ENCODE measurements at regions of chr14 and their contacts with region 1.

Region 1: GRCh38 chr14:50860478-50861086 is 11.3 kb upstream of the ABHD12B start:
- DNase-seq: peak; percentile 71
- H3K4me3 Mint-ChIP-seq: peak overlapping the region; percentile 84
- H3K27ac Mint-ChIP-seq: no peak overlapping the region
- H3K4me1 Mint-ChIP-seq: peaks cover 18% of the 10 kb centered on the region
- H3K27me3 Mint-ChIP-seq: peaks cover 28% of the 10 kb centered on the region

Region 2: GRCh38 chr14:50321009-50321660 is 539.4 kb before region 1 on chr14:
- intact Hi-C with region 1: loop called (anchors 2 kb)
- DNase-seq: peak; percentile 68
- H3K4me3 Mint-ChIP-seq: no peak overlapping the region
- H3K27ac Mint-ChIP-seq: no peak overlapping the region
- H3K4me1 Mint-ChIP-seq: peaks cover 20% of the 10 kb centered on the region
- H3K27me3 Mint-ChIP-seq: no peaks in the 10 kb centered on the region

Region 3: DNA sequence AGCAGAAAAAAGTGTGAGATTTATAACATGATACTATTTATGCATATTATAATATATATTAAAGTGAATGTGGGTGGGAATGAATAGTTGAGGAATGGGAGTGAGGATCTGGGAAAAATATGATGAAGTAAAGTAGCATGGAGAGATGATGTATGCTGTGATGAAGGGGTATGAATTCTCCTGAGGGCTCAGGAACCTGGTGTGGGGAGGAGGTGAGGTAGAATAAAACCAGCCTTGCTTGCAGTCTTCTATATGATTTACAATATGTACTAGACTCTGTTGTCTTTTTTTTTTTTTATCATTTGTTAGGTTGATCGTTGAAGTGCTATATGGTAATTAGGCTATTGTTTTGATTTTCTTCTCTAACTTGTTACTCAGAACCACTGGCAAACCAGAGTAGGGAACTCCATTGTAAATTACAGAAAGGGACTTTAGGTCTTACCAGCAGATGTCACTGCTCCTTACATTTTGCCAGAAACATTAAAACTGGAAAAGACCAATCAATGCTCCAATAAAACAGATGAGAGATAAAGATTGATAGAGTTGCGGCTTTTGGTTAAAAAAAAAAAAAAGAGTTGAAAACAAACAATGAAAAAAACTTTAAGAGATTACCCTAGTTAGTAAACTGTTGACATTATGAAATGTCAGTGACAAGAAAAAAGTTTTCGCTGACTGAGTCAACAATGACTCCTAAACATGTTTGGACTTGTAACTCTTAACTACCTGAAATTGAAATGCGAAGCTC is 260.7 kb before region 1 on chr14:
- intact Hi-C with region 1: loop called (anchors 1 kb)
- DNase-seq: no peak
- H3K4me3 Mint-ChIP-seq: no peak overlapping the region
- H3K27ac Mint-ChIP-seq: no peak overlapping the region
- H3K4me1 Mint-ChIP-seq: no peaks in the 10 kb centered on the region
- H3K27me3 Mint-ChIP-seq: peaks cover 4% of the 10 kb centered on the region

Region 4: DNA sequence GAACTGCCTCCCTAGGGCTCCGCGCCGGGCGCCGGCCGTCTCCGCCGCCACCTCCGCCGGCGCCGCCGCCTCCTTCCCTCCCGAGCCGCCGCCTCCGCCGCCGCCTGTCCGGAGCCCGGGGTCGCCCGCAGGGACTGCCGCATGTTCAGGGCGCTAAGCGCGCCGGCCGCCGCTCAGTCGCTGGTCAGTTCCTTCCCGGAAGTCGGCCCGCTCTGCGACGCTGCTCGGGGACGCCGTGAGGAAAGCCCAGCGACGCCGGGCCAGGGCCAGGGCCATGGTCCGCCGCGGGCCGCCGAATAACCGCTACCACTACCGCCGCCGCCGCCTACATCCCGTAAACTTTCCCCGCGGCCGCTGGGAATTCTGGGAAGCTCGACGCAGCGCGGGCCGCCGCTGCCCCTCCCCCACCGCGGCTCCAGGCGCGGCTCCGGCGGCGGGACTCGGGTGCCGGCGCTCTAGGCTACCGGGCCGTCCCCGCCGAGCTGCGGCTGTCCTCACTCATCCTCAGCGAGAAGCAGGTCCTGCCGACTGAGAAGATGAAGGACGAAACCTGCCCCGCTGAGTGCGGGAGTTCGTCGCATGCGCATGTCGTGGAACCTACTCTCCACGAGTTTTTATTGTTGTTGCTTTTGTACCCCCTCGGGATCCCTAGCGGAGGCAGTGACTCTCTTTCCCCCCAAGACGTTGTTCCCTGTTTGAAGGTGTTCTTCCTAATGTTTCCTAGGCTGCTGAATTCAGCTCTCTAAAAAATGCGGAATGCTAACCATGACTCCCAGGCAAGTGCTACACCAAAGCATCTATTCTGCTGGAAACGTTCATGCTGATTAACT is 192.4 kb before region 1 on chr14 and contains the start of gene SAV1:
- intact Hi-C with region 1: loop called (anchors 1 kb)
- DNase-seq: peak; percentile 20
- H3K4me3 Mint-ChIP-seq: peak within 1 kb of the TSS; percentile 86
- H3K27ac Mint-ChIP-seq: peak within 1 kb of the TSS; percentile 47
- H3K4me1 Mint-ChIP-seq: peaks cover 15% of the 10 kb centered on the region
- H3K27me3 Mint-ChIP-seq: peaks cover 10% of the 10 kb centered on the region
- total RNA-seq, gene SAV1: 10.3 and 12.3 TPM in 2 replicates

Region 5: GRCh38 chr14:50785457-50786063 is 75.0 kb before region 1 on chr14:
- intact Hi-C with region 1: loop called (anchors 1 kb)
- DNase-seq: no peak
- H3K4me3 Mint-ChIP-seq: peak overlapping the region; percentile 56
- H3K27ac Mint-ChIP-seq: peak overlapping the region; percentile 79
- H3K4me1 Mint-ChIP-seq: peaks cover 61% of the 10 kb centered on the region
- H3K27me3 Mint-ChIP-seq: no peaks in the 10 kb centered on the region

Region 6: DNA sequence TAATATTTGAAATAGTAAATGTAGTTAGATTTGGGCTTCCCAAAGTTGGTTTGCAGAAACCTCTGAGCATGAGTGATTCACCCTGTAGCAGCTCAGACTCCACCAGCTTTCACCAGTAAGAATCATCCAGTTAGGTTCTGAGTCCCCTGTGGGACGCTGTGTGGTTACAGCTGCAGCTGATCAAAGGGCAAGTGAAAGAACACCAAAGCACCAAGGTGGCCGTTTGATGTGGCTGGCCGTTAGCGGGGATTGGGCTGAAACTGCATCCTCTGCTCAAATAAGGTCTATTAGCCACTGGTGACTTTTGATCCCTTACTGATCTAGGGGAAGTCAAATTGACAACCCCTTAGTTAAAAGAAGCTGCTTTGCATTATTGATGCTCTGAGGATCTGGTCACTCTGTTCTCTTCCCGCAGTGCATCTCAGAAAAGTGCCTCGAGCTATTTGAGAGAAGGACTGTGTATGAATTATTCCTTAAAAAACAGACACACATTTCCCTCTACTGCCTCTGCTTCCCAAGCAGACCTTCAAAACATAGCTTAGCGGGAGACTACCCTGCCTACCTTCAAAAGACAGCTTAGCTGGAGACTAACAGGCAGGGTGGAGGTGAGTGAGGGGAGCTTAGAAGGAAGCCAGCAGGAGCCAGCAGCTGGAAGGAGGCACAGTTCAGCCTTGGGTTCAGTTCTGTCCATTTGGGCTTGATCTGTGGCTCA is 14.9 kb after region 1 on chr14:
- intact Hi-C with region 1: loop called (anchors 1 kb)
- DNase-seq: peak; percentile 50
- H3K4me3 Mint-ChIP-seq: no peak overlapping the region
- H3K27ac Mint-ChIP-seq: peak overlapping the region; percentile 56
- H3K4me1 Mint-ChIP-seq: peaks cover 24% of the 10 kb centered on the region
- H3K27me3 Mint-ChIP-seq: peaks cover 85% of the 10 kb centered on the region

Region 7: GRCh38 chr14:50887476-50887875 is 26.9 kb after region 1 on chr14:
- intact Hi-C with region 1: no loop called
- DNase-seq: no peak
- H3K4me3 Mint-ChIP-seq: no peak overlapping the region
- H3K27ac Mint-ChIP-seq: no peak overlapping the region
- H3K4me1 Mint-ChIP-seq: no peaks in the 10 kb centered on the region
- H3K27me3 Mint-ChIP-seq: peaks cover 26% of the 10 kb centered on the region

Region 8: GRCh38 chr14:50927987-50928635 is 67.5 kb after region 1 on chr14:
- intact Hi-C with region 1: no loop called
- DNase-seq: no peak
- H3K4me3 Mint-ChIP-seq: no peak overlapping the region
- H3K27ac Mint-ChIP-seq: no peak overlapping the region
- H3K4me1 Mint-ChIP-seq: no peaks in the 10 kb centered on the region
- H3K27me3 Mint-ChIP-seq: peaks cover 3% of the 10 kb centered on the region